ENCODE measurements at regions of chr19 and their contacts with region 1.

Region 1: DNA sequence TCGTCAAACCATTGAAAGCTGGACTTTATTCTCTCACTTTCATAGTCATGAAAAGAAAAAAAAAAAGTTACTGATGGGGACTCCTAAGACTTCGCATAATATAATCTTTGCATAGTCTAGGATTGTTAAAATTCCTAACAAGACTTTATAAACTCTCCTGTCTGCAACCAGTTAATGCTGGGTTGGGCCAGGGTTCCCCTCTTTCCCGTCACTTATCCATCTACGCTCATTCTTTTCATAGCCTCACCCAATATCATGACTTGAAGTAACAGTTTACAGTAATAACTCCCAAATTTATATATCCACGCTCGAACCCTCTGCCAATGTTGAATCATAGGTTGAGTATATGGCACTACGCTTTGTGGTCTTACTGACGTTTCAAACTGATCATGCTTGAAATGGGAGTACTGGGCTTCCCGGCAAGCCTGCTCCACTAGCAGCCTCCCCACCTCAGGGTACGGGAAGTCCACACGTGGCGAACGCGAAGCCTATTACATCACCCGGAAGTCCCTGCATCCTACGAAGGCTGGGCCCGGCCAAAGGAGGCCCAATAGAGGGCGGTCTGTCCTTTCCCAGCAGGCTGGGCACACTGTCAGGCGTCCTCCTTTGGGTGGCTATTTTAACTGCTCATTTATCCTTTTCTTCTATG is 743 bp upstream of the ZNF460 start:
- DNase-seq: peak; percentile 92
- ATAC-seq: peak; percentile 90
- H3K4me3 ChIP-seq: peak overlapping the region; percentile 99
- H3K27ac ChIP-seq: peak overlapping the region; percentile 93
- H3K4me1 ChIP-seq: peaks cover 9 to 23% of the 10 kb centered on the region in 2 experiments
- H3K27me3 ChIP-seq: no peaks in the 10 kb centered on the region
- CTCF ChIP-seq: peak in 2 of 3 experiments; percentile 26 to 29; a peak in 2 of 6 replicates
- POLR2A ChIP-seq: peak; percentile 84
- RAD21 ChIP-seq: peak; percentile 58

Region 2: GRCh38 chr19:57103573-57104277 is 175.8 kb before region 1 on chr19:
- CTCF ChIA-PET with region 1: no interaction called
- POLR2A ChIA-PET with region 1: no interaction called
- RAD21 ChIA-PET with region 1: no interaction called
- intact Hi-C with region 1: loop called (anchors 5 kb)
- DNase-seq: peak; percentile 16
- ATAC-seq: no peak
- H3K4me3 ChIP-seq: no peak overlapping the region
- H3K27ac ChIP-seq: no peak overlapping the region
- H3K4me1 ChIP-seq: no peaks in the 10 kb centered on the region
- H3K27me3 ChIP-seq: no peaks in the 10 kb centered on the region
- CTCF ChIP-seq: peak; percentile 6 to 74 (median 72); a peak in 5 of 6 replicates
- POLR2A ChIP-seq: no peak
- RAD21 ChIP-seq: peak; percentile 60

Region 3: GRCh38 chr19:57240311-57241090 is 39.0 kb before region 1 on chr19 and contains the start of gene ZNF805:
- CTCF ChIA-PET with region 1: no interaction called
- POLR2A ChIA-PET with region 1: no interaction called
- RAD21 ChIA-PET with region 1: no interaction called
- intact Hi-C with region 1: loop called (anchors 1 kb)
- DNase-seq: peak; percentile 88
- ATAC-seq: peak; percentile 94
- H3K4me3 ChIP-seq: peak within 1 kb of the TSS; percentile 82 to 90
- H3K27ac ChIP-seq: peak within 1 kb of the TSS; percentile 81
- H3K4me1 ChIP-seq: peaks cover 6 to 16% of the 10 kb centered on the region in 2 experiments; a peak in 3 of 4 replicates
- H3K27me3 ChIP-seq: no peaks in the 10 kb centered on the region
- CTCF ChIP-seq: no peak
- POLR2A ChIP-seq: peak; percentile 58
- RAD21 ChIP-seq: no peak
- total RNA-seq, gene ZNF805: 9.2 TPM

Region 4: DNA sequence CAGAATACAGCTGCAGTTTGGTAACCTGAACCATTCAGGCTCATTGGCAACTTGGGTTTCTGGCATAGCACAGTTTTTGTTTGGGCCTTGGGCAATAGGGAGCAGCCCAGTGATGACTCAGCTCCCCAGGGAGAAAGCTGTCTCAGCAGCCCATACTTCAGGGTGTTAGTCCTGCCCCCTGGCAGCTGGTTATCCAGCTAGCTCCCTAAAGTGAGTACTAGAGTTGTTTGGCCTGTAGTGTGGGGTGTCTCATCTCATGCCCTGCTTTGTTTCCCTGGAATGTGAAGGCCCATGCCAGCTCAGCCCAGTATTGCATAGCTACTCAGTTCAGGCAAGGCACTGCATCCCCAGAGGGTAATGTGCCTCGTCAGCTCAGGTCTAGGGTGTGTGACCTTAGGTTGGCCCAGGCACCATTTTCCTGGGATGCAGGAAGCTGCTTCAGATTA is 22.5 kb after region 1 on chr19:
- CTCF ChIA-PET with region 1: no interaction called
- POLR2A ChIA-PET with region 1: no interaction called
- RAD21 ChIA-PET with region 1: no interaction called
- intact Hi-C with region 1: loop called (anchors 2 kb)
- DNase-seq: no peak
- ATAC-seq: peak; percentile 61
- H3K4me3 ChIP-seq: no peak overlapping the region
- H3K27ac ChIP-seq: no peak overlapping the region
- H3K4me1 ChIP-seq: peaks cover 0 to 23% of the 10 kb centered on the region in 2 experiments; a peak in 2 of 4 replicates
- H3K27me3 ChIP-seq: no peaks in the 10 kb centered on the region
- CTCF ChIP-seq: no peak
- POLR2A ChIP-seq: no peak
- RAD21 ChIP-seq: no peak

Region 5: GRCh38 chr19:57320180-57321084 is 40.9 kb after region 1 on chr19 and contains the start of gene ZNF543:
- CTCF ChIA-PET with region 1: no interaction called
- POLR2A ChIA-PET with region 1: no interaction called
- RAD21 ChIA-PET with region 1: no interaction called
- intact Hi-C with region 1: loop called (anchors 1 kb)
- DNase-seq: peak; percentile 92
- ATAC-seq: peak; percentile 99
- H3K4me3 ChIP-seq: peak within 1 kb of the TSS; percentile 75 to 80
- H3K27ac ChIP-seq: peak within 1 kb of the TSS; percentile 78
- H3K4me1 ChIP-seq: peaks cover 9 to 13% of the 10 kb centered on the region in 2 experiments
- H3K27me3 ChIP-seq: no peaks in the 10 kb centered on the region
- CTCF ChIP-seq: no peak; a peak in 1 of 6 replicates
- POLR2A ChIP-seq: peak; percentile 53
- RAD21 ChIP-seq: no peak
- total RNA-seq, gene ZNF543: 7.6 TPM

Region 6: GRCh38 chr19:57389730-57390598 is 110.4 kb after region 1 on chr19 and contains the start of gene ZNF548:
- CTCF ChIA-PET with region 1: no interaction called
- POLR2A ChIA-PET with region 1: no interaction called
- RAD21 ChIA-PET with region 1: no interaction called
- intact Hi-C with region 1: no loop called
- DNase-seq: peak; percentile 98
- ATAC-seq: peak; percentile 99
- H3K4me3 ChIP-seq: peak within 1 kb of the TSS; percentile 73 to 85
- H3K27ac ChIP-seq: peak within 1 kb of the TSS; percentile 61
- H3K4me1 ChIP-seq: peaks cover 6 to 16% of the 10 kb centered on the region in 2 experiments; a peak in 2 of 4 replicates
- H3K27me3 ChIP-seq: no peaks in the 10 kb centered on the region
- CTCF ChIP-seq: 0 out of 6 replicates have a peak, but pooled peaks of 1 of the 3 experiments have one; percentile 11
- POLR2A ChIP-seq: peak; percentile 39
- RAD21 ChIP-seq: no peak
- total RNA-seq, gene ZNF548: 8.7 TPM